ENCODE measurements at regions of chr18 and their contacts with region 1.

Region 1: GRCh38 chr18:50356036-50356945 is 18.6 kb upstream of the SKA1 start:
- DNase-seq: peak in 3 of 35 experiments; percentile 4 to 18 (median 5)
- ATAC-seq: peak in 2 of 4 experiments; percentile 35 to 38
- H3K4me3 ChIP-seq: no peak overlapping the region
- H3K4me3 Mint-ChIP-seq: peak overlapping the region in 1 of 3 donors; percentile 9
- H3K27ac ChIP-seq: no peak overlapping the region
- H3K27ac Mint-ChIP-seq: peak overlapping the region in 1 of 2 donors; percentile 19
- H3K4me1 ChIP-seq: peaks cover 0 to 6% of the 10 kb centered on the region in 2 experiments
- H3K4me1 Mint-ChIP-seq: peaks cover 7 to 11% (median 7%) of the 10 kb centered on the region in 3 donors
- H3K27me3 ChIP-seq: peaks cover 2 to 10% of the 10 kb centered on the region in 2 experiments
- H3K27me3 Mint-ChIP-seq: peaks cover 8 to 35% of the 10 kb centered on the region in 2 donors

Region 2: DNA sequence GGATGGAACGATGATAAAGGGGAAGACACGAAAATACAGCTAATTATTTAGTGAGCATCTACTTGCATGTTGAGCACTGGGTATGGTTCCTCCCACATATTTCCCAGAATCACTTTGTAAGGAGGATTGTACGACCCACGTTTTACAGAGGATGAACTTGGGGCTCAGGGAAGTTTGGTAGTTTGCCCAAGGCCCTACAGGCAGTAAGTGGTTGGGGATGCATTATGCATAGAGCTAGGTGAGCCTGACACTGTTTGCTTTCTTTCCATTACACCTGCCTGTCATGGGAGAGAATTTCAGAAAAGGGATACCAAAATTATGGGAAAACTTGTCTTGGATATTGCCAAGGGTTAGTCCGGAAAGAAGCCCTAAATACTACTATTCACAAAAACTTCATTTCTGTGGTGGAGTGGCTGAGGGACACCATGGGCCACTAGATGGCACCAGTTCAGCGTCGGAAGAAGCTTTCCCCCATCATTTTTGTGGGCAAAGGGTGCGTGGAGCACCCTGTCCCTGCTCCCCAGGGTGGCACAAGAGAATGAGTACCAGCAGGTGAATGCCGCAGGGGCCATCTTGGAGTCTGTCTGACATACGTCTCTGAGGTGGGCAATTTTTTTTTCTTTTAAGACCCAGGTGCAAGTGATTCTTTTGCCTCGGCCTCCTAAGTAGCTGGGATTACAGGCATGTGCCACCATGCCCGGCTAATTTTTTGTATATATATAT is 845.7 kb before region 1 on chr18:
- CTCF ChIA-PET with region 1: interaction called, 9 to 14 read pairs
- POLR2A ChIA-PET with region 1: no interaction called
- DNase-seq: peak in 34 of 35 experiments; percentile 10 to 78 (median 36)
- ATAC-seq: peak; percentile 66 to 74 (median 70)
- H3K4me3 ChIP-seq: no peak overlapping the region
- H3K4me3 Mint-ChIP-seq: no peak overlapping the region
- H3K27ac ChIP-seq: no peak overlapping the region
- H3K27ac Mint-ChIP-seq: no peak overlapping the region
- H3K4me1 ChIP-seq: no peaks in the 10 kb centered on the region
- H3K4me1 Mint-ChIP-seq: no peaks in the 10 kb centered on the region
- H3K27me3 ChIP-seq: peaks cover 2 to 14% of the 10 kb centered on the region in 2 experiments
- H3K27me3 Mint-ChIP-seq: peaks cover 6 to 25% of the 10 kb centered on the region in 2 donors

Region 3: GRCh38 chr18:50218432-50219197 is 137.7 kb before region 1 on chr18:
- CTCF ChIA-PET with region 1: interaction called, 29 to 54 read pairs
- POLR2A ChIA-PET with region 1: interaction called in 1 of 2 experiments, 3 read pairs
- DNase-seq: peak in 20 of 35 experiments; percentile 3 to 66 (median 20)
- ATAC-seq: peak in 2 of 4 experiments; percentile 43 to 53
- H3K4me3 ChIP-seq: no peak overlapping the region
- H3K4me3 Mint-ChIP-seq: no peak overlapping the region
- H3K27ac ChIP-seq: no peak overlapping the region
- H3K27ac Mint-ChIP-seq: no peak overlapping the region
- H3K4me1 ChIP-seq: no peaks in the 10 kb centered on the region
- H3K4me1 Mint-ChIP-seq: no peaks in the 10 kb centered on the region
- H3K27me3 ChIP-seq: peaks cover 0 to 16% of the 10 kb centered on the region in 2 experiments
- H3K27me3 Mint-ChIP-seq: peaks cover 27 to 41% of the 10 kb centered on the region in 2 donors

Region 4: DNA sequence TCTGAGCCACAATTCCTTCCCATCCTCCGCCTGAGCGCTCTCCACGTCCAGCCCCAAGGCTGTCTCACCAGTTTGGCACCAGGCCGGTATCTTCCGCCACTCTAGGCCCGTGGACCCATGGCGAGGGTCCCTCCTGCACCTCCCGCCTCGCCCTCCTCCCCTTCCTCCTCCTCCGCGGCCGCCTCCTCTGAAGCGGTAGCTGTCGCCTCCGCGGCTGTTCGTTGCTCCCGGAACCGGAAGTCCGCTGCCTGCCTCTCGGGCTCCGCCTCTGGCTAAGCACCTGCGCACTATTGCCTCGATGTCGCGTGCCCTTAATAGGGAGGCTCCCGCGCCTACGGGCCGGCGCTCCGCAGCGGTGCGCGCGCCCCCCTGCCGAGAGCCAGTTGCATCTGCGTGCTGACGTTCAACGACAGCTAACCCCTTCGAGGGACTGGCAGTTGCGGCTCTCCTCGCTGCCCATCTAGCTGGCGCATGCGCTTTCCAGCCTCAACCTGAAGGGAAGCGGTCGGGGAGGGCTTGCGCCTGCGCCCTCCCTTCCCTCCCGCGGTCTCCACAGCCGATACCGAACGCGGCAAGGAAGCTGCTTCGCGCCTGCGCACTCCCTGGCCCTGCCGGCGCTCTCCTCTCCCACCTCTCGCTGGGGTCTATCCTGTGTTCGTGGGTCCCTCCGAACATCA is 74.9 kb before region 1 on chr18 and contains the start of gene MBD1:
- CTCF ChIA-PET with region 1: interaction called in 1 of 2 experiments, 11 read pairs
- POLR2A ChIA-PET with region 1: interaction called in 1 of 2 experiments, 3 read pairs
- DNase-seq: peak; percentile 92 to 99 (median 96)
- ATAC-seq: peak; percentile 89 to 93 (median 92)
- H3K4me3 ChIP-seq: peak within 1 kb of the TSS; percentile 66 to 95
- H3K4me3 Mint-ChIP-seq: peak within 1 kb of the TSS; percentile 90 to 96 (median 96)
- H3K27ac ChIP-seq: peak within 1 kb of the TSS; percentile 88
- H3K27ac Mint-ChIP-seq: peak within 1 kb of the TSS; percentile 87 to 92
- H3K4me1 ChIP-seq: peaks cover 28 to 39% of the 10 kb centered on the region in 2 experiments
- H3K4me1 Mint-ChIP-seq: peaks cover 41 to 55% (median 46%) of the 10 kb centered on the region in 3 donors
- H3K27me3 ChIP-seq: no peaks in the 10 kb centered on the region
- H3K27me3 Mint-ChIP-seq: no peaks in the 10 kb centered on the region
- total RNA-seq, gene MBD1: 98.2 to 151 (median 136) TPM

Region 5: GRCh38 chr18:50297621-50298442 is 58.5 kb before region 1 on chr18:
- CTCF ChIA-PET with region 1: interaction called in 1 of 2 experiments, 10 read pairs
- POLR2A ChIA-PET with region 1: no interaction called
- DNase-seq: peak; percentile 39 to 79 (median 66)
- ATAC-seq: peak; percentile 88 to 97 (median 96)
- H3K4me3 ChIP-seq: peak overlapping the region; percentile 42 to 80
- H3K4me3 Mint-ChIP-seq: peak overlapping the region; percentile 74 to 77 (median 74)
- H3K27ac ChIP-seq: no peak overlapping the region
- H3K27ac Mint-ChIP-seq: no peak overlapping the region
- H3K4me1 ChIP-seq: peaks cover 5 to 14% of the 10 kb centered on the region in 2 experiments
- H3K4me1 Mint-ChIP-seq: peaks cover 9 to 12% (median 10%) of the 10 kb centered on the region in 3 donors
- H3K27me3 ChIP-seq: peaks cover 4 to 21% of the 10 kb centered on the region in 2 experiments
- H3K27me3 Mint-ChIP-seq: peaks cover 14 to 27% of the 10 kb centered on the region in 2 donors

Region 6: DNA sequence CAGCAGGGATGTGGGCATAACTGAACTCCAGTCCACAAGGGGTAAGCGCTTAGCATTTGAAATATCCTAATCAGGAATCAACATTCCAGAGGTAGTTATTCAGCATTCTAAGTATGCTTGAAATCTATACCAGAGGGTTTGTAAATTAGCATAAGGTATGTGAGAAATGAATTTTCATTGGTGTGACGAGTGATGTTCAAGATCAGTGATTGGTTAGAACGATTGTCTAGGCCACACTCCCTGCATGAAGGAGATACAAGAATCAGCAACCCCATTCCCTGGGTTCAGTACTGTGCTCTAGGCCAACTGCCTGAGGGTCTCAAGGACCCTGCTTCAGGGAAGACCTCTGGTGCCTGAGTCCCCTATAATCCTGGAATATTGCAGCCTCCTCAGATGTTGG is 246.2 kb after region 1 on chr18:
- CTCF ChIA-PET with region 1: no interaction called
- POLR2A ChIA-PET with region 1: no interaction called
- DNase-seq: no peak
- ATAC-seq: no peak
- H3K4me3 ChIP-seq: no peak overlapping the region
- H3K4me3 Mint-ChIP-seq: no peak overlapping the region
- H3K27ac ChIP-seq: no peak overlapping the region
- H3K27ac Mint-ChIP-seq: no peak overlapping the region
- H3K4me1 ChIP-seq: no peaks in the 10 kb centered on the region
- H3K4me1 Mint-ChIP-seq: no peaks in the 10 kb centered on the region
- H3K27me3 ChIP-seq: peaks cover 0 to 8% of the 10 kb centered on the region in 2 experiments
- H3K27me3 Mint-ChIP-seq: peaks cover 7 to 18% of the 10 kb centered on the region in 2 donors

Measured in T-cell (primary cell).